PC-9 (cell line): ENCODE measurements at regions of chr6 and their contacts with region 1.

Region 1: GRCh38 chr6:163180874-163181541 is 233.5 kb upstream of the QKI start:
- DNase-seq: peak; percentile 59 to 68
- H3K4me3 ChIP-seq: no peak overlapping the region
- H3K27ac ChIP-seq: peak overlapping the region; percentile 78
- H3K4me1 ChIP-seq: peaks cover 16% of the 10 kb centered on the region
- H3K27me3 ChIP-seq: no peaks in the 10 kb centered on the region
- CTCF ChIP-seq: peak; percentile 84

Region 2: GRCh38 chr6:162251257-162251656 is 929.8 kb before region 1 on chr6:
- CTCF ChIA-PET with region 1: no interaction called
- POLR2A ChIA-PET with region 1: no interaction called
- intact Hi-C with region 1: no loop called
- DNase-seq: peak in 1 of 2 experiments; percentile 0
- H3K4me3 ChIP-seq: no peak overlapping the region
- H3K27ac ChIP-seq: no peak overlapping the region
- H3K4me1 ChIP-seq: no peaks in the 10 kb centered on the region
- H3K27me3 ChIP-seq: no peaks in the 10 kb centered on the region
- CTCF ChIP-seq: no peak

Region 3: DNA sequence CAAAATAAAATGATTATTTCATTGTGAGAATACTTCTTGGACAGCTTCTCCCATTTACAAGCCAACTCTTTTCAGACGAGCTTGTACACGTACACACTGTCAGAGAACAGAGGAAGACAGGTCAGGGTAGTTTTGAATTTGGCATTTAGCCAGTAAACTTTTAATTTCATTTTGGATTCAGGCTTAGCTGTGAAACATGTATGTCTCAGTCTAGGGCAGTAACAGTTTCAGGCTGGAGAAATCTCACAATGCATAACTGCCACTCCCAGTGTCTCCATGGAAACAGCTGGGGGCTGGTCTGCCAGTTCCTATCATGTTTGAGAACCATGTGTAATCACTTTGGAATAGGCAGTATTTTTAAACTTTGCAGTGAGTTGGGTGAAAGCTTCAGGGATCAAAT is 211.5 kb after region 1 on chr6:
- CTCF ChIA-PET with region 1: no interaction called
- POLR2A ChIA-PET with region 1: interaction called, 4 read pairs
- intact Hi-C with region 1: loop called (anchors 2 kb)
- DNase-seq: peak; percentile 51 to 81
- H3K4me3 ChIP-seq: peak overlapping the region; percentile 55
- H3K27ac ChIP-seq: peak overlapping the region; percentile 98
- H3K4me1 ChIP-seq: peaks cover 42% of the 10 kb centered on the region
- H3K27me3 ChIP-seq: no peaks in the 10 kb centered on the region
- CTCF ChIP-seq: no peak

Region 4: GRCh38 chr6:163413345-163414116 is 232.5 kb after region 1 on chr6:
- CTCF ChIA-PET with region 1: no interaction called
- POLR2A ChIA-PET with region 1: no interaction called
- intact Hi-C with region 1: loop called (anchors 1 kb)
- DNase-seq: peak; percentile 62 to 76
- H3K4me3 ChIP-seq: peak overlapping the region; percentile 77
- H3K27ac ChIP-seq: peak overlapping the region; percentile 79
- H3K4me1 ChIP-seq: peaks cover 26% of the 10 kb centered on the region
- H3K27me3 ChIP-seq: no peaks in the 10 kb centered on the region
- CTCF ChIP-seq: no peak

Region 5: DNA sequence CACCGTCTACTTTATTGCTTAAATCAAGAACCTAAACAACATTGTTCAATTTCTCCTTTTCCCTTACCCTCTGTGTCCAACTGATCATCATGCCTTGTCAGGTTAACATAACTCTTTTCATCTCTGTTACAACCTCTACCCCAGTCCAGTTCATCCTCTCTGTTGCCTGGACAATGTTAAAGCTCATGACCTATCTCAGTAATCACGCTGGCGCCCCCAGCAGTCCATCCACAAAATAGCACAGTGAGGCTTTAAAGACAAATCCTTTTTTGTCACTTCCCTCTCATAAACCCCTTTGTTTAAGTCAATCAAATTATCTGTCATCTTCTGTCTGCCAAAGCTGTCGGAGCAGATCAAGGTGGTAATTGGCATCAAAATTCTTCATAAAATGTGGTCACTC is 373.7 kb after region 1 on chr6:
- CTCF ChIA-PET with region 1: no interaction called
- POLR2A ChIA-PET with region 1: no interaction called
- intact Hi-C with region 1: loop called (anchors 5 kb)
- DNase-seq: peak in 1 of 2 experiments; percentile 15
- H3K4me3 ChIP-seq: no peak overlapping the region
- H3K27ac ChIP-seq: no peak overlapping the region
- H3K4me1 ChIP-seq: no peaks in the 10 kb centered on the region
- H3K27me3 ChIP-seq: no peaks in the 10 kb centered on the region
- CTCF ChIP-seq: peak; percentile 66

Region 6: DNA sequence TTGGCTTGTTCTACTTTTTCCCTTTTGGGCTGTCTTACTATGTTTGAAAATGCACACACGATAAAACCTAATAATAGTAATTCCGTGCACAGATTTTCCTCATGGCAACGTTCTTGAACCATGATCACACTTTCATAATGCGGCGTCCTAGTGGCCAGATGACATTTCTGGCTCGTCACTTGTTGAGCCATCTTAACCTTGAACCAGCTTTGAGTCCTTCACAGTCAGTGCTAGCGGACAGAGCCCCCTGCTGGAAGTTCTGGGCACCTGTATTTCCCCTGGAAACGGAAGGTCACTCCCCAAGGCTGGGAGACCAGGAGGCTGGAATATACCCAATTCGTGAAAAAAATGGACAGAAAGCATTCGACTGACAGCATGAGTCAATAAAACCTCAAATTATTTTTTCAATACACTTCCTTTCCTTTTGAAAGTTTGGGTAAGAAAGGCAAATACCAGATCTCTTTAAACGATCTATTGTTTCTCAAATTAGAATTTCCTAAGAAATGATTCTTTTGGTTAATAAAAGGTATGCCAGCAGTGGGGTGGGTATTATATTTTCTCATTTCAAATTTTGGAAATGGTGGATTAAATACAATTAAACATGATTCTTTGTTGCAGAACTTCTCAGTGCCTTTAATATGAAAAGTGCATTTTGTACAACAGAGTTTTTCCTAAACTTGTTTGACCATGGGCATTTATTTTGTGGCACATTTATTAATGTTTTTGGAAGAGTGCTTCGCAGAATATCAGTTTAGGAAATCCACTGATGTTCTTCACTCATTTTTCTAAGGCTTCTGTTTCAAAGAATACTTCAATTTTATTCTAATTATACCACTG is 775.8 kb after region 1 on chr6:
- CTCF ChIA-PET with region 1: no interaction called
- POLR2A ChIA-PET with region 1: no interaction called
- intact Hi-C with region 1: loop called (anchors 5 kb)
- DNase-seq: peak; percentile 22 to 35
- H3K4me3 ChIP-seq: no peak overlapping the region
- H3K27ac ChIP-seq: no peak overlapping the region
- H3K4me1 ChIP-seq: no peaks in the 10 kb centered on the region
- H3K27me3 ChIP-seq: peaks cover 41% of the 10 kb centered on the region
- CTCF ChIP-seq: peak; percentile 77

Region 7: DNA sequence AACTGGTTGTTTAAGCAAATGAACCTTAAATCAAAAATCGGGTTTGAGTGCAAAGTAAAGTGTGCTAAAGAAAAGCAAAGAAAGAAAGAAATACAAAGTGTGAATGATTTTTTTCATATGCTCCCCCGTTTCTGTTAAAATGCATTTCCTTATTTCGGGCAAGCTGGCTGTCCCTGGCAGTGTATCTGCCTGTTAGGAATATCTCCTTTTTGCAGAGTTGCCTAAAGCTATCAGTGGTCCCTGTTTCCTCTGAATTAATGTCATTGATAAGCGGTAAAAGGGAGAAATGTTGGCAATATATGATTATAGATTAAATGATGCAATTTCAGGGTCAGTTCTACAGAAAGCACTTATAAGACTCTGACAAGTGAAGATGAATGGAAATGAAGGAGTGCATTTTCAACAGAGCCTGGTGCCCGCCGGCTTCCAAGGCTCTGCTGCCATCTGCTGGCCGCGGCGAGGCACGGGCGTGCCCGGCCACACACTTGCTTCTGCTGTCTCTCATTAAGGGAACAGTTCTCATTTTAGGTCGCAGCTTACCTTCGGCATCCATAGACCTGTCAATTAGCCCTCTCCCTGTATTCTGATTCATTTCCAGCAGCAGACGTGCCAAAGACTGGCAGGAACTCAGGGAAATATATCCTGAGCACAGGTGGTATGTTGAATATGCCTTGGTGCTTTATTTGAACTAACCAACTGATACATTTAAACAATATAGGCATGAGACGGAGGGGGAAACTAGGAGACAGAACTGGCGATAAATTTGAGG is 1746.5 kb after region 1 on chr6:
- CTCF ChIA-PET with region 1: no interaction called
- POLR2A ChIA-PET with region 1: no interaction called
- intact Hi-C with region 1: loop called (anchors 2 kb)
- DNase-seq: peak in 1 of 2 experiments; percentile 38
- H3K4me3 ChIP-seq: no peak overlapping the region
- H3K27ac ChIP-seq: no peak overlapping the region
- H3K4me1 ChIP-seq: no peaks in the 10 kb centered on the region
- H3K27me3 ChIP-seq: no peaks in the 10 kb centered on the region
- CTCF ChIP-seq: peak; percentile 90